Esophagus muscularis mucosa (tissue), 4 donors: ENCODE measurements at regions of chr16 and their contacts with region 1.

Region 1: DNA sequence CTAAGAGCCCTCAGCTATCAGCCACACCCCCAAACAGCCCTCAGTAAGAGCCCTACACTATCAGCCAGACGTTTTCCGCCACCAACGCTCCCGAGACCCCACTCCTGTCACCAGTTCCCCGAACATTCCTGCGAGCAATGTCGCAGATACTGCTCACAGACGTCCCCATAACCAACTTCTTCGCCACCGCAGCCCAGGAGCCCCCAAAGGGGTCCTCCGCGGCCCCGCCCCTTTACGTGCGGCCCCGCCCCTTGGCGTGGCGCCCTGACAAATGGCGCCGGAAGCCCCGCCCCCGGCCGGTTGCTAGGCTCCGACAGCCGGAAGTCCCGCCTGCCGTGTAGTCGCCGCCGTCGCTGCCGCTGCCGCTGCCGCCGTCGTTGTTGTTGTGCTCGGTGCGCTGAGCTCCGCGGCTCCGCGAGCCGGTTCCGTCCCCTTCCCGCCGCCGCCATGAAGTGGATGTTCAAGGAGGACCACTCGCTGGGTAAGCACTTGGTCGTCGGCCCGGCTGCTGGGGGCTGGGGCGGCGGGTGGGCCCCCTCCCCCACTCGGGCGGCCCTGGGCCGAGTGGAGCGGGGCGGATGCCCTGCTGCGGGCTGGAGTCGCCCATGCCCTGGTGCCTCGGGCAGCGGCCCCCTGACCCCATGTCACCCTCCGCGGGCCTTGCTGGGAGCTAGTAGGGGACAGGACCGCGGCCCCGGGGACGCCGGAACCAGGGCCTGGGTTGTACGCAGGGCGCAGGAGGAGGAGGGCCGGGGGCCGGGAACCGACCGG is at the start of gene GABARAPL2:
- DNase-seq: no peak
- H3K4me3 ChIP-seq: peak within 1 kb of the TSS; percentile 71 to 100 (median 92)
- H3K27ac ChIP-seq: peak within 1 kb of the TSS; percentile 73 to 82 (median 74)
- H3K4me1 ChIP-seq: peaks cover 47 to 60% (median 55%) of the 10 kb centered on the region in 4 donors
- H3K27me3 ChIP-seq: no peaks in the 10 kb centered on the region
- CTCF ChIP-seq: peak in 1 of 3 experiments; percentile 20
- EP300 ChIP-seq: no peak
- POLR2A ChIP-seq: peak; percentile 46
- total RNA-seq, gene GABARAPL2: 84.5 to 114 (median 101) TPM

Region 2: GRCh38 chr16:75519881-75520280 is 46.3 kb before region 1 on chr16:
- intact Hi-C with region 1: loop called (anchors 5 kb)
- DNase-seq: no peak
- H3K4me3 ChIP-seq: no peak overlapping the region
- H3K27ac ChIP-seq: no peak overlapping the region
- H3K4me1 ChIP-seq: peaks cover 4 to 15% (median 12%) of the 10 kb centered on the region in 4 donors
- H3K27me3 ChIP-seq: no peaks in the 10 kb centered on the region
- CTCF ChIP-seq: no peak
- EP300 ChIP-seq: no peak
- POLR2A ChIP-seq: no peak

Region 3: DNA sequence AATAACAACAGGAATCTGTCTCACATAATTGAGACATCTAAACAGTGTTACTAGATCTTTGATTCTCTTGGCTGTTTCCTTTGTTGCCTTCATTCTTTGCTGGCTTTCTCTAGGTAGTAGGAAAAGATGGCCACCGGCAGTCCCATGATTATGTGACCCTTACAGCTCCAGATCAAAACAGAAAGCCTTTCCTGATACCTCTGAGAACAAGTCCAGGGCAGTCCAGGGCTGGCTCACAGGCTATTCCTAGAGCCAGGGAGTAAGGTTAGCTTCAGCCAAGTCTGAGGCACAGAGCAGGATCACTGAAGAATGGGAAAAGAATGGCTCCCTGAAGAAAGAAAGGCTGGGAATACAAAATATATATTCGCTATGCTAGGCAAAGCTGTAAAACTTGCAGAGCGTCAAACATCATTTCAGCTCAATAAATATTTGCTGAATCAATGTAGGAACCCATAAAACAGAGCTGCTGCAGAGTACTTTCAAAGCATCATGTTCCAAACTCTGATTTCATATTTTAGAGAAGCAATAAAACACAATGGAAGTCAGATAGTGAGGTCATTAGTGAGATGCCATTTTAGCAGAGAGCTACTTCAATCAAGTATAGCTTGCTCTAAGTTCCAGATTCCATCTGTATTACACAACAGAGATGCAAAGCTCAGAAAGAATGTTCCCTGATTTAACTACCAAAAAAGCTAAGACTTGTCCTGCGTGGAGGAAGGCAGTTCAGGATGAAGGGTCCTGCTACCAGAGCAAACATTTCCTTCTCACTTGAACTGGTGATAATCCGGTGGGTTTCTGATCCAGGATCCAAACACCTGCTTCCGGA is 33.4 kb after region 1 on chr16:
- intact Hi-C with region 1: no loop called
- DNase-seq: no peak
- H3K4me3 ChIP-seq: no peak overlapping the region
- H3K27ac ChIP-seq: no peak overlapping the region
- H3K4me1 ChIP-seq: no peaks in the 10 kb centered on the region
- H3K27me3 ChIP-seq: no peaks in the 10 kb centered on the region
- CTCF ChIP-seq: no peak
- EP300 ChIP-seq: no peak
- POLR2A ChIP-seq: no peak